Mammary epithelial cell (primary cell): ENCODE measurements at regions of chr1 and their contacts with region 1.

Region 1: GRCh38 chr1:172322219-172323061 is 98.0 kb upstream of the C1orf105 start:
- DNase-seq: peak; percentile 67
- H3K4me3 ChIP-seq: peak overlapping the region; percentile 12 to 40 (median 32)
- H3K27ac ChIP-seq: peak overlapping the region; percentile 93
- H3K4me1 ChIP-seq: peaks cover 45% of the 10 kb centered on the region
- H3K27me3 ChIP-seq: no peaks in the 10 kb centered on the region
- CTCF ChIP-seq: peak in 1 of 2 donors; percentile 16

Region 2: GRCh38 chr1:171817511-171818265 is 504.8 kb before region 1 on chr1:
- CTCF ChIA-PET with region 1: interaction called, 21 read pairs
- dilution Hi-C with region 1: no loop called
- in situ Hi-C with region 1: no loop called
- intact Hi-C with region 1: no loop called
- DNase-seq: peak; percentile 90
- H3K4me3 ChIP-seq: no peak overlapping the region
- H3K27ac ChIP-seq: no peak overlapping the region
- H3K4me1 ChIP-seq: peaks cover 15% of the 10 kb centered on the region
- H3K27me3 ChIP-seq: no peaks in the 10 kb centered on the region
- CTCF ChIP-seq: no peak

Region 3: DNA sequence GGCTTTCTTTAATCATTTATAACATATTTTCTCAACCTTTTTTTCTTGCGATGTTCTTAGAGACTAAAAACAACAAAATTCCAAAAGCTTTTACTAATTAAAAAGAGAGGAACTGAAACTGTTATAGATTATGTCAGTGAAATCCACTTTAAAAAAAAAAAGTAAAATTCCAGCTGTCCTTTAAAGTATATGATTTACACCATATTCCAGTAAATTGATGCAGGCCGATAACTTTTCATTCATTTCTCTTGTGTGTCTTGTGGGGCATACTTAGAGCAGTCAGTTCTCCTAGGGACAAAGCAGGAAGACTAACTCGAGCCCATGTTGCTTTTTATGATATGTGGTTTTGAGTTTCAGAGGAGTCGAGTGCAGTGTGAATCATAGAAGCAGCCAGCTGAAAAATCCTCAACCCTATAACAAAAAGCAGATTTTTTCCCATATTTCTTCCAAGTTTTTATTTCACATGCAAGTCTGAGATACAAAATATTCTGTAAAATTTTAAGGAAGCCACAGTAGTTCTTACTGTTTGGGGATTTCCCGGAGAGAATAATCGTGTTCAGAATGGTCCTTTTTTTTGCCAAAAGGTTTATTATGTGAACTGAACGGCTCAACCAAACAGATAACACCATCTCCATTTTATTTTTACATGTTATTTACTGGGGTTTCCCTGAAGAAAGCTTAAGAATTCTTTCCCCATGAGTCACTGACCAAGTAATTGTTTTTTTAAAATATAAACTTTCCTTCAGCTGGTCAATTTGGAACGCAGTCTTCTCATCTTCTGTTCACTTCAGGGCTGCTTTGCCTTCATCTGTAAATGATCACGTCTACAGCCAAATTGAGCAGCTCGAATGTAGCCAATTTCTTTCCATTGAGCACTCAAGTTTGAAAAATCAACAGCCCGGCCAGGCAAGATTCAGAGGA is 21.1 kb after region 1 on chr1:
- CTCF ChIA-PET with region 1: interaction called, 13 read pairs
- dilution Hi-C with region 1: no loop called
- in situ Hi-C with region 1: no loop called
- intact Hi-C with region 1: no loop called
- DNase-seq: peak; percentile 61
- H3K4me3 ChIP-seq: no peak overlapping the region
- H3K27ac ChIP-seq: peak overlapping the region; percentile 69
- H3K4me1 ChIP-seq: peaks cover 23% of the 10 kb centered on the region
- H3K27me3 ChIP-seq: no peaks in the 10 kb centered on the region
- CTCF ChIP-seq: no peak